ENCODE measurements at regions of chr1 and their contacts with region 1.

Region 1: GRCh38 chr1:209576798-209577197 is 6.7 kb upstream of the CAMK1G start:
- DNase-seq: peak; percentile 80 to 89 (median 86)
- H3K4me3 ChIP-seq: no peak overlapping the region
- H3K27ac ChIP-seq: no peak overlapping the region
- H3K4me1 ChIP-seq: no peaks in the 10 kb centered on the region
- H3K27me3 ChIP-seq: no peaks in the 10 kb centered on the region
- CTCF ChIP-seq: peak; percentile 96

Region 2: DNA sequence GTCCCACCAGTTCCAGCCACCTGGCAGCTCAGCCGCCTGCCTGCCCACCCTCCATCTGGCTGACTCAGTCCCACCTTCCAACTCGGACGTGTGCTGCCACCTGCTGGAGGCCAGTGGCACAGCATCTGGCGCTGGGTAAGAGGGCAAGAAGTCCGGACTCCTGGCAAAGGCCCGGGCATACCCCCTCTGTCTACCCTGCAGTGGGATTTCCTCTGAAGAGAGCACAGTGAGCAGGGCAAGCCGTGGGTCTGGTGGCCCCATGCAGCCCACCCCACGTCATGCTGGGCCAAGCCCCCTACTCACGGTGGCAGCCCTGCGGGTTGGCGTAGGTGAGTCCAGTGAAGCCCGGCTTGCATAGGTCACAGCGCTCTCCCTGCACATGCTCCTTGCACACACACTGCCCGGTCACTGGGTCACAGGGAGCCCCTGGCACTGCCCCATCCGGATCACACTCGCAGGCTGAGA is 51.0 kb after region 1 on chr1:
- intact Hi-C with region 1: loop called (anchors 10 kb)
- DNase-seq: peak; percentile 86 to 92 (median 89)
- H3K4me3 ChIP-seq: peak overlapping the region in 1 of 3 donors; percentile 25
- H3K27ac ChIP-seq: no peak overlapping the region
- H3K4me1 ChIP-seq: peaks cover 0 to 17% (median 14%) of the 10 kb centered on the region in 3 donors
- H3K27me3 ChIP-seq: no peaks in the 10 kb centered on the region
- CTCF ChIP-seq: peak; percentile 98

Region 3: DNA sequence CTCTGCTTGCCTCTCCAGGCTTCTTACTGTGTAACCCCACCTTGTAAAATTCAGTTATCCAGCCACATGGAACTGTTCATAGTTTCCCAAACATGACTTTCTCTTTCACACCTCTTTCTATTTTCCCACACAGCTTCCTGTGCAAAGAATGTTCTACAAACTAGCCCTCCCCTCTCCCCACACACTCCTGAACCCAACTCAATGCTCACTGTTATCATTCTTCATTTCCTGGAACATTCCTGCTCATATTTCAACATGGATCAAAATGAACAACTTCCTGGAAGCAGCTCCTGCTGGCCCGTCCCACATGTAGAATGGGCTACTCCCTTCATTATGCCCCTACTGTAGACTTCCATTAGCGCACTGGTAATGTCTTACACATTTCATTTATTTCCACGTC is 120.3 kb after region 1 on chr1:
- intact Hi-C with region 1: loop called (anchors 5 kb)
- DNase-seq: no peak
- H3K4me3 ChIP-seq: no peak overlapping the region
- H3K27ac ChIP-seq: no peak overlapping the region
- H3K4me1 ChIP-seq: peaks cover 0 to 4% (median 0%) of the 10 kb centered on the region in 3 donors
- H3K27me3 ChIP-seq: no peaks in the 10 kb centered on the region
- CTCF ChIP-seq: no peak

Region 4: DNA sequence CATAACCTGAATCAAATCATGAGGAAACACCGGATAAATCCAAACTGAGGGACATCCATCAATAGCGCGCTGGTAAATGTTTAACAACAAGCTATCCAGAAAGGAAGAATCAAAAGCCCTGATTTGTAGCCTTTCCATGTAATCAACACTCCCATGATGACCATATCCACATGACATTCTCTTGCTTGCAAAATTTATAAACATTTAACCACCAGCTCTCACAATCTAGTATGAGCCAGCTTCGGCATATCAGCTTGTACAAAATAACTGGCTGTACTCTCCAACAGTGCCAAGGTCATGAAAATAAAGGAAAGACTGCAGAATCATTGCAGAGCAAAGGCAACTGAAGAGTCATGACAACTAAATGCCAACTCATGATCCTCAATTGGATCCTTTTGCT is 143.5 kb after region 1 on chr1:
- intact Hi-C with region 1: no loop called
- DNase-seq: no peak
- H3K4me3 ChIP-seq: no peak overlapping the region
- H3K27ac ChIP-seq: peak overlapping the region; percentile 78 to 81
- H3K4me1 ChIP-seq: peaks cover 0 to 30% (median 11%) of the 10 kb centered on the region in 3 donors
- H3K27me3 ChIP-seq: no peaks in the 10 kb centered on the region
- CTCF ChIP-seq: no peak

Measured in kidney (tissue), 22 donors.